ENCODE measurements at regions of chr2 and their contacts with region 1.

Region 1: DNA sequence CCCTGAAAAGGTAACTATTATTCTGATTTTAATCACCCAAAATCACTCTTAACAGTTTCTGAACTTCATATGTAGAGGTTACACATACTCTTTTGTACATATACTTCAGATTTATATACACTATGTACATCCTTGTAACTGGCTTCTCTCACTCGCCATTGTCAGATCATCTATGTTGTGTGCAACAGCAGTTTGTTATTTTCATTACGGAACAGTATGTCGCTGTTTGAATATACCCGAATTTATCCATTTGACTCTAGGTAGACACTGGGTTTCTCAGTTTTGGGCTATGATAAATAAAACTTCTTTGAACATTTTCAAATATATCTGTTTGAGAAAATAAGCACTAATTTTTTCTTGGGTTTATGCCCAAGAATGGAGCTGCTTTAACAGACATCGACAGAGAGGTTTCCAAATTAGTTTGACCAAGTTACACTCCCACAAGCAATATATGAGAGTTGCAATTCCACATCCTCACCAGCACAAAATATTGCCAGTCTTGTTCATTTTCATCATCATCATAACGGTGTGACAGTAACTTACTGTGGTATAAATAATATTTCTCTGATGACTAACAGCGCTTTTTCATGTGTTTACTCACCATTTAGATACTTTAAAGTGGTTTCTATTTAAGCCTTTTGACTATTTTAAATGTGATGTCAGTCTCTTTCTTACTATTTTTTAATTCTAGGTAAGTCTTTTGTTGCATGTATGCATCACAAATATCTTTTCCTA is 80.9 kb downstream of the SMC6 start:
- DNase-seq: no peak
- H3K4me3 Mint-ChIP-seq: no peak overlapping the region
- H3K27ac Mint-ChIP-seq: no peak overlapping the region
- H3K4me1 Mint-ChIP-seq: peaks cover 5% of the 10 kb centered on the region
- H3K27me3 Mint-ChIP-seq: no peaks in the 10 kb centered on the region

Region 2: GRCh38 chr2:17470855-17471641 is 201.7 kb before region 1 on chr2:
- intact Hi-C with region 1: loop called (anchors 5 kb)
- DNase-seq: no peak
- H3K4me3 Mint-ChIP-seq: no peak overlapping the region
- H3K27ac Mint-ChIP-seq: no peak overlapping the region
- H3K4me1 Mint-ChIP-seq: no peaks in the 10 kb centered on the region
- H3K27me3 Mint-ChIP-seq: no peaks in the 10 kb centered on the region

Region 3: DNA sequence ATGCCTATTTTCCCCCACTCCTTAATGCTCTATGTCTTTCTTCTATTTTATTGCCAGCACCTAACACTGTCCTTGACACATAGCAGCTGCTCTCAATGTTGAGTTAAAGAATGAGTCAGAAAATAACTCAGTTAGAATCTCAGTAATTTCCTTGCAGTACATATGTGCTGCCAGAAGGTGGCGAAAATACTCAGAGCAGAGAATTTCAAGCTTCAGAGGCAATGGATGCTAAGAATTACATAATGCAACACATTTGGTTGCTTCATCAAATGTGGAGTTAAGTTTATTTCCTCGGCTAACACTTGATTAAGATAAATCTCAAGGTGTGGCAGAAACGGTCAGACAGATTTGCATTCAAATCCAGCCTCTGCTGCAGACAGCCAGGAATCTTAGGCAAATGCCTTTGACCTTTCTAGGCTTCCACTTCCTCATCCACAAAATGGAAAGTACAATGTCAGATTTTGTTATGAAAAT is 26.6 kb before region 1 on chr2:
- intact Hi-C with region 1: loop called (anchors 1 kb)
- DNase-seq: peak; percentile 25
- H3K4me3 Mint-ChIP-seq: no peak overlapping the region
- H3K27ac Mint-ChIP-seq: no peak overlapping the region
- H3K4me1 Mint-ChIP-seq: peaks cover 4% of the 10 kb centered on the region
- H3K27me3 Mint-ChIP-seq: no peaks in the 10 kb centered on the region

Region 4: GRCh38 chr2:17791121-17791816 is 118.5 kb after region 1 on chr2:
- intact Hi-C with region 1: no loop called
- DNase-seq: no peak
- H3K4me3 Mint-ChIP-seq: no peak overlapping the region
- H3K27ac Mint-ChIP-seq: no peak overlapping the region
- H3K4me1 Mint-ChIP-seq: peaks cover 20% of the 10 kb centered on the region
- H3K27me3 Mint-ChIP-seq: peaks cover 39% of the 10 kb centered on the region

Measured in activated T-helper 2 cell treated with anti-CD3 and anti-CD28 coated beads, Interferon-gamma antibody, Interleukin-2, Interleukin-4, amounts not matched to agents 10 μg/mL and 5 μg/mL and 100 μg/mL, durations not matched to agents 14 hours and 24 hours and 36 hours (primary cell).